ENCODE measurements at regions of chr1 and their contacts with region 1.

Region 1: DNA sequence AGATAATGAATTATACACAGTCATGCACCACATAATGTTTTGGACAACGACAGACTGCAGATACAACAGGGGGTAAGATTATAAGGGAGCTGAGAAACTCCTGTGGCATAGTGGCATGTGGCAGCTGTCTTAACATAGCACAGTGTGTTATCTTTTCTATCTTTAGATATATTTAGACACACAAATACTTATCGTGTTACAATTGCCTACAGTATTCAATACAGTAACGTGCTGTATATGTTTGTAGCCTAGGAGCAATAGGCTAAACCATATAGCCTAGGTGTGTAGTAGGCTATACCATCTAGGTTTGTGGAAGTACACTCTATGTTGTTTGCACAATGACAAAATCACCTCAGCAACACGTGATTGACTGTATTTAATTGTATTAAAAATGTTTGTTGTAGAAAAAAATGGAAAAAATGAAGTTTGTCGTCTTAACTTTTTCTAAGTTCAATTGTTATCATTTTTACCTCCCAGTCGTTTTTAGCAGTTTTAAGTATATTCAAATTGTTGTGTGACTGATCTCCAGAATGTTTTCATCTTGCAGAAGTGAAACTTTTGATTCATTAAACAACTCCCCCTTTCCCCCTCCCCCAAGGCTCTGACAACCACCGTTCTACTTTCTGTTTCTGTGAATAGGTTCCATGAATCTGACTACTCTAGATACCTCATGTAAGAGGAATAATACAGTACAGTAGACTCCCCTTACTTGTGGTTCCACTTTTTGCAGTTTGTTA is 351.0 kb upstream of the B3GALT2 start:
- DNase-seq: peak; percentile 84
- ATAC-seq: peak; percentile 89
- H3K4me3 Mint-ChIP-seq: no peak overlapping the region
- H3K27ac Mint-ChIP-seq: peak overlapping the region; percentile 53
- H3K4me1 Mint-ChIP-seq: peaks cover 47% of the 10 kb centered on the region
- H3K27me3 Mint-ChIP-seq: no peaks in the 10 kb centered on the region

Region 2: DNA sequence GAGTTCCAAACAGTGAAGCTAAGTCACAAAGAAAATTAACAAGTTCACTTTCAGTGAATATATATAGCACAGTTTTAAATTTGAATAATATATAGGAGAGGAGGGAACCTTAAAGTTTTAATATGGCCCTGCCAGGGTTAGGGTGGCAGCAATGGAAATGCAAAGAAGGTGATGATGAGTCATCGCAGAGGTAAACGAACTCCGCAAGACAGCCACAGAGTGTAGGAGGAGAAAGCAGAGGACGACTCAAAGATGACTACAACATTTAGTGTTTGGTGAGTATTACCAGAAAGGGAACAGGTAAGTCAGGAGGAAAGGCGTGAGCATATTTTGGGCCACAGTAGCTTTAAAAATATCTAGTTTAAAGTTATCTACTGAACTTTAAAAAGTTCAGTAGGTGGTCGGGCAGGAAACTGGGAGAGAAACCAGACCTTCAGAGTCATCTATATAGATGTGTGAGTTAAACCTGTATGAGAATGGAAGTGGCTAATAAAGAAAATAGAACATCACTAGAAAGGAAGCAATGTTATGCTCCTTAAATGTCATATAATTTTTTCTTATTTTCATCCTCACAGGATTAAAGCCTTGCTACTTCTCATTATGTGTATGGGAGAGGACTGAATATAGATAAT is 554.0 kb before region 1 on chr1:
- CTCF ChIA-PET with region 1: no interaction called
- POLR2A ChIA-PET with region 1: no interaction called
- intact Hi-C with region 1: loop called in 1 of 2 experiments (anchors 2 kb)
- DNase-seq: peak; percentile 67
- ATAC-seq: peak; percentile 84
- H3K4me3 Mint-ChIP-seq: no peak overlapping the region
- H3K27ac Mint-ChIP-seq: peak overlapping the region; percentile 76
- H3K4me1 Mint-ChIP-seq: peaks cover 39% of the 10 kb centered on the region
- H3K27me3 Mint-ChIP-seq: no peaks in the 10 kb centered on the region

Region 3: GRCh38 chr1:193406901-193407300 is 130.5 kb before region 1 on chr1:
- CTCF ChIA-PET with region 1: no interaction called
- POLR2A ChIA-PET with region 1: no interaction called
- intact Hi-C with region 1: loop called in 1 of 2 experiments (anchors 2 kb)
- DNase-seq: no peak
- ATAC-seq: no peak
- H3K4me3 Mint-ChIP-seq: no peak overlapping the region
- H3K27ac Mint-ChIP-seq: no peak overlapping the region
- H3K4me1 Mint-ChIP-seq: peaks cover 24% of the 10 kb centered on the region
- H3K27me3 Mint-ChIP-seq: no peaks in the 10 kb centered on the region

Region 4: GRCh38 chr1:193456811-193457280 is 80.6 kb before region 1 on chr1:
- CTCF ChIA-PET with region 1: no interaction called
- POLR2A ChIA-PET with region 1: interaction called, 5 read pairs
- intact Hi-C with region 1: loop called (anchors 1 to 5 kb)
- DNase-seq: no peak
- ATAC-seq: no peak
- H3K4me3 Mint-ChIP-seq: no peak overlapping the region
- H3K27ac Mint-ChIP-seq: no peak overlapping the region
- H3K4me1 Mint-ChIP-seq: peaks cover 21% of the 10 kb centered on the region
- H3K27me3 Mint-ChIP-seq: no peaks in the 10 kb centered on the region

Region 5: DNA sequence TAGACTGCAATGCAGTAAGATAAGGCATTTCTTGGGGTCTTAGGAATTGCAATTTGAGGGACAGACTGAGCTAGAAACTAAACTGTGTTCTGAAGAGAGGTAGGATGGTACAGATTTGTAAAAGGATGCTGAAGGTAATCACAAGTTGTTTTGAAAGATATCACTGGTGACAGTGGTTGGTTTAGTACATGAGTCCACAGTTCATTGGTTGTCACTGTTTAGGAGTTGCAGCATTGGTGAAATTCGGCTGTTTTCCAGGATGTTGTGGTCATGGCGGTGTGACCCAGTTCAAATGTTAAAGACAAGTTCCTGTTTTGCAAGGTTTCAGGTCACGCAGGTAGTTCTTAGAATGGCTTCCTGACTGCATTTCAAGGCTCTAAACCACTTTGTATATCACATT is 58.2 kb before region 1 on chr1:
- CTCF ChIA-PET with region 1: no interaction called
- POLR2A ChIA-PET with region 1: no interaction called
- intact Hi-C with region 1: no loop called
- DNase-seq: peak; percentile 80
- ATAC-seq: peak; percentile 87
- H3K4me3 Mint-ChIP-seq: no peak overlapping the region
- H3K27ac Mint-ChIP-seq: peak overlapping the region; percentile 85
- H3K4me1 Mint-ChIP-seq: peaks cover 50% of the 10 kb centered on the region
- H3K27me3 Mint-ChIP-seq: no peaks in the 10 kb centered on the region

Region 6: GRCh38 chr1:193609592-193609991 is 72.2 kb after region 1 on chr1:
- CTCF ChIA-PET with region 1: no interaction called
- POLR2A ChIA-PET with region 1: no interaction called
- intact Hi-C with region 1: no loop called
- DNase-seq: no peak
- ATAC-seq: no peak
- H3K4me3 Mint-ChIP-seq: no peak overlapping the region
- H3K27ac Mint-ChIP-seq: no peak overlapping the region
- H3K4me1 Mint-ChIP-seq: peaks cover 20% of the 10 kb centered on the region
- H3K27me3 Mint-ChIP-seq: no peaks in the 10 kb centered on the region

Region 7: GRCh38 chr1:193700710-193701355 is 163.4 kb after region 1 on chr1:
- CTCF ChIA-PET with region 1: no interaction called
- POLR2A ChIA-PET with region 1: no interaction called
- intact Hi-C with region 1: loop called (anchors 1 to 2 kb)
- DNase-seq: no peak
- ATAC-seq: peak; percentile 91
- H3K4me3 Mint-ChIP-seq: no peak overlapping the region
- H3K27ac Mint-ChIP-seq: no peak overlapping the region
- H3K4me1 Mint-ChIP-seq: peaks cover 15% of the 10 kb centered on the region
- H3K27me3 Mint-ChIP-seq: no peaks in the 10 kb centered on the region

Region 8: GRCh38 chr1:195195423-195196057 is 1658.1 kb after region 1 on chr1:
- CTCF ChIA-PET with region 1: no interaction called
- POLR2A ChIA-PET with region 1: no interaction called
- intact Hi-C with region 1: loop called in 1 of 2 experiments (anchors 10 kb)
- DNase-seq: peak; percentile 35
- ATAC-seq: peak; percentile 90
- H3K4me3 Mint-ChIP-seq: no peak overlapping the region
- H3K27ac Mint-ChIP-seq: no peak overlapping the region
- H3K4me1 Mint-ChIP-seq: peaks cover 8% of the 10 kb centered on the region
- H3K27me3 Mint-ChIP-seq: peaks cover 16% of the 10 kb centered on the region

Measured in activated CD4-positive, alpha-beta T cell treated with anti-CD3 and anti-CD28 coated beads for 36 hours (primary cell).